ENCODE measurements at regions of chr3 and their contacts with region 1.

Region 1: DNA sequence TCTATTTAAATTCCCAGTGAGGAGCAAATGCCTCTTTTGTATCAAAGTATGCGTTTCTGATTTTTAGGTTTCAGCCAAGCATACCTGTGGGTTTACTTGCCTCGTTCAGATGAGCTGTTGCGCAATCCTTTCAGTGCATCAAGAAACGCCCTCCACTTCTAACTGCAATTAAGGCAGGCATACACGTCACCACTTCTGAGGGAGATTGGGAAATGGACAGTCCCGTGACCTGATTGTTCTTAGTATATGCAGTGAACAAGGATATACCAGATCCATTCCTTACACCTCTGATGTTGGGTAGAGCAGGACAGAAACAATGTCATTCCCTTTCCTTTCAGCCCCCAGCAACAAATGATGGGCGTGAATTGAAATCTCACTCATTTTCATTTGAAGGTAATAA is 219.0 kb downstream of the ITPR1 start:
- DNase-seq: no peak
- ATAC-seq: peak; percentile 35

Region 2: GRCh38 chr3:4898454-4899313 is 186.5 kb after region 1 on chr3:
- intact Hi-C with region 1: no loop called
- DNase-seq: no peak
- ATAC-seq: no peak

Region 3: DNA sequence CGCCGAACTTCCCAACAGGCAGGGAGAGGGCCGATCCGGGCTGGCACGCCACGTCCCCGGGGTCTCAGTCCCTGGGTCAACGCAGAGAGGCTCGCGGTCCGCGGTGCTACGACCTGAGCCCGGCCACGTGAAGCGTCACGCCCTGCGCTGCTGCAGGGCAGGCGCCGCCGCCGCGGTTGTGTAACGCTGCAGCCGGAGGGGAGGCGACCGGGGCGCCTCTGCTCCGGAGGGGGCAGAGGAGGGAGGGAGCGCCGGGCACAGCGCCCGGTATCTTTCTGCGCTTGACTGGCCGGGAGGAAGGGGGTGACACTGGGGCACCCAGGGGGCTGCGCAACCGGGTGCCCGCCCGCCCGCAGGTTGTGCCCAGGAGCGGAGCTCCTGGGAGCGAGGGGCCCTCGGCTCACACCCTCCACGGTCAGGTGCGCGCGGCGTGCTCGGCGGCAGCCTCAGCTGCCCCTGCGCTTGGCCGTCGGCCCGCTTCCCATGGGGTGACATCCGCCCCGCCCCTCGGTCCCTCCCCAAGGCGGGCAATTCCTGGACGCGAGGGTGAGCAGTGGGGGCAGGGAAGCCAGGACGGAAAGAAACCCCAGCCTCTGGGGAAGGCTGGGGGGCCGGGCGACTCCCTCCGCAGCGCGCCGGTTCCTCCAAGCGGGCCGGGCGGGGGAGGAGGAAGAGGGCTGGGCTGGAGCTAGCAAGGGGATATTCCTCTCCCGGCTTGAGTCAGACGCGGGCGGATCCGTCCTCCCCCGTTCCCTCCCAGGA is 266.2 kb after region 1 on chr3:
- intact Hi-C with region 1: loop called (anchors 5 kb)
- DNase-seq: peak; percentile 98
- ATAC-seq: peak; percentile 79

Region 4: GRCh38 chr3:5057857-5058324 is 345.7 kb after region 1 on chr3:
- intact Hi-C with region 1: loop called (anchors 5 kb)
- DNase-seq: peak; percentile 66
- ATAC-seq: peak; percentile 93

Measured in left ventricle myocardium superior (tissue), 1 donor.